ENCODE measurements at regions of chr6 and their contacts with region 1.

Region 1: GRCh38 chr6:110398778-110399177 is 16.6 kb downstream of the DDO start:
- DNase-seq: no peak
- CTCF ChIP-seq: no peak

Region 2: DNA sequence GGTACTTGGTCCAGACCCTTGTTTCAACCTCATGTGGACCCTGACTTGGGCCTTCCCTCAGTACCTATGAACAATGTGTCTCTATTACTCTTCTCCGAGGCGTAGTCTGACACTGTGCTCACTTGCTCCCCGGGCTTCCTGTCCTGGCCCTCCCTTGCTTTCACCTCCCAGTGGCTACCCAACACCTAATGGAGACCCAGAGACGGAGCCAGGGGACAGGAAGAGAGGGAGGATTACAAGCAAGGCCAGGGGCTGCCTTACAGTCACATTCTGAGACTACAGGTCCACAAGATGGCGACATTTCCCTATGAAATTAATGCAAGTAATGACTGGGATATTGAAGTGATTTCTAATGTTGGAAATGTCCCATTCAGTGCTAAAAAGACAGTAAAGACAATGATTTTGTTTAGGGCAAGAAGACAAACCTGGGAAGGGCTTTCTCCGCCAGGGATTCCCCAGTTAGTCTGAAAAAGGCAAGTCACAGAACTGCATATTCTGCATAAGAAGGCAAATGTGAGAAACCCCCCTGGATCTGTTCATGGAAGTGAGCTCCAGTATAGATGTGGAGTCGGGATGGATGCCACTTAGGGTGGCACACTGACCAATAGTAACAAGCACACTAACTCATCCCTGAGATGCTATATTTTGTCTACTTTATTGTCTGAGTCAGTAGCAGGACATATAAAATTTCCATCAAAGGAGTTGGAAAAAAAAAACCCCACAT is 871.7 kb before region 1 on chr6:
- in situ Hi-C with region 1: loop called (anchors 25 kb)
- DNase-seq: peak; percentile 26
- CTCF ChIP-seq: peak; percentile 75

Region 3: DNA sequence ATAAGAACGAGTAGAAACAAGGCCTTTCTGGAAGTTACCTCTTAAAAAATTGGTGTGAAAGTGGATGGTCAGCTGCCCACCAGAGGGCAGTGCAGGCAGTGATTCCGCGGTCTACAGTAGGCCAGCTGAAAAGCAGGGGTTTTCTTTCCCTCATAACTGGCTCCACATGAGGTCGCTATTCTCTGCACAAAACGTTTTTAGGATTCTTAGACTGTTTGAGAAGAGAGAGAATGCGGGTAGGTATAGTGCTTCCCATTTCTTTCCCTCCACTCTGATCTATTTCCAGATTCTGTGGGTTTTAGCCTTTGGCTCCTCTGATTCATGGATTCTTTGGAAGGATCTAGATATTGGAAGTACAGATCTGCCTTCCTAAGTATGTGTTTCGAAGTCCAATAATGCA is 693.5 kb before region 1 on chr6:
- in situ Hi-C with region 1: loop called (anchors 25 kb)
- DNase-seq: peak; percentile 53
- CTCF ChIP-seq: peak; percentile 98

Region 4: GRCh38 chr6:110053395-110054240 is 345.2 kb before region 1 on chr6:
- in situ Hi-C with region 1: loop called (anchors 25 kb)
- DNase-seq: peak; percentile 43
- CTCF ChIP-seq: peak; percentile 68

Region 5: DNA sequence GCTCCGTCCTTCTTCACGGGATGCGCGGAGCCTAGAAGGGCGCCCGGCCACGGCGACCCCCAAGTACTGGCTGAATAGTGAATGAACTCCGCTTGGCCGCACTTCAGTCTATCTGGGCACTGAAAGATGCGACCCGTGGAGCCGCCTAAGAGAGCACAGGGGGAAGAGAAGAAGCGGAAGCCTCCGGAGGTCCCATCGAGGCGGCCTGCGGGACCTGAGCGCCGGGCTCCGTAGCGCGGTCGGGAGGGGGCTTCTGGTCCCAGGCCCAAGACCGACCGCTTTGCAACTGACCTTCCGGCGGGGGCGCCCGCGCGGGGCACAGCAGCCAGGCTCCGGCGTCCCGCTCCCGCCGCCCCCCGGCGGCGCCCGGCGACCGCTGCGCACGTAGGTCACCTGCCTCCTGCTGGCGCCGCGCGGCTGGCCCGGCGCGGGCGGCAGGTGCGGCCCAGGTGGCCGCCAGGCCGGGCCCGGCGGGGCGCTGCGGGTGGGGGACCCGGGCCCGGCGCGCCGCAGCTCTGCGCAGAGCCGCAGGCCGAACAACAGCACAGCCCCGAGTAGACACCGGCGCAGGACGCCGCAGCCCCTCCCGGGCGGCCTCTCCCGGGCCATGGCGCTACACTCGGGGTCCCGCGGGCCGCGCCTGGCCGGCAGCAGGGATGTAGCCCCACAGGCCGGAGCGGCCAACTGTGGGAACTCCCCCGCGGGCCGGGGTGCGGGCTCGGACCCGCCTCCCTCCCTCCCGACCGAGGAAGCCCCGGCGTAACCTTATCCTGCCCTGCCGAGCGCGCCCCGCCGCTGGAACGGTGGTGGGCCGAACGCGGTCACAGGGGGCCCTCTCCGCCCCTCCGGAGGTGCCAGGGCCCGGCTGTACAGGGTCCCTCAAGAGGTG is 40.9 kb before region 1 on chr6 and contains the start of gene METTL24:
- in situ Hi-C with region 1: no loop called
- DNase-seq: peak; percentile 39
- CTCF ChIP-seq: peak; percentile 10